CD14-positive monocyte (primary cell): ENCODE measurements at regions of chr19 and their contacts with region 1.

Region 1: GRCh38 chr19:46678110-46678732 is 17.2 kb upstream of the DACT3 start:
- DNase-seq: no peak
- H3K4me3 ChIP-seq: no peak overlapping the region
- H3K4me3 Mint-ChIP-seq: no peak overlapping the region
- H3K27ac ChIP-seq: no peak overlapping the region
- H3K27ac Mint-ChIP-seq: peak overlapping the region in 1 of 7 donors; percentile 54
- H3K4me1 ChIP-seq: no peaks in the 10 kb centered on the region
- H3K4me1 Mint-ChIP-seq: no peaks in the 10 kb centered on the region
- H3K27me3 ChIP-seq: no peaks in the 10 kb centered on the region
- H3K27me3 Mint-ChIP-seq: peaks cover 0 to 4% (median 3%) of the 10 kb centered on the region in 3 donors
- CTCF ChIP-seq: no peak

Region 2: DNA sequence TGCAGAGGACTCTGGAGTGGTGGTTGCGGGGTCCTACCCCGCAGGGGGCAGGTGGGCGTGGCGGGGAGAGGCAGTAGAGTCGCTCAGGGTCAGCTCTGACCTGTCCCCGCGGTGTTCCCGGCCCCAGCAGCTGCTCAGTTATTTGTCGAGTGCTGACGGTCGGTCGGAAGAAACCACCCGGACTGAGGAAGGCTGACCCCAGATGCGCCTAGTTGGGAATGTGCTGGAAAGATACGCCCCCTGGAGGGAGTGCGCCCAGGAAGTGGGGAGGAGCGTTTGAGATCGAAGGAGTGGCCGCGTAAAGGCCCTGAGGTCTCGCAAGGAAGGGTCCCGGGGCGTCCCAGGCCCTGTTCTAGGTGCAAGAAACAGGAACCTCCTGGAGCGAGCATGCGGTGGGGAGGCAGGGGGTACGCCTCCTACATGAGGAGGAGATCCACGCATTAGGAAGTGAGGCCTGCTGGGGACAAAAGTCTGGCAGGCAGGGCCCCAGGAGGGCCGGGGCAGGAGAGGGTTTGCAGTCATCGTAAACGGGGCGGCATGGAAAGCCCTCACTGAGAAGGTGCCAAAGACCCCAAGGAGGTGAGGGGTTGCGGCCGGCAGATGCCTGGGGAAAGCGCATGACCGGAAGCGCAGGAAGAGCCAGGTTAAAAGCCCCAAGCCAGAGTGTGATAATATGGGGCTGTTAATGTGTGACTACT is 274.0 kb before region 1 on chr19:
- intact Hi-C with region 1: loop called (anchors 10 kb)
- DNase-seq: peak in 2 of 3 donors; percentile 20 to 23
- H3K4me3 ChIP-seq: peak overlapping the region in 1 of 3 experiments; percentile 61
- H3K4me3 Mint-ChIP-seq: peak overlapping the region; percentile 56 to 91
- H3K27ac ChIP-seq: no peak overlapping the region
- H3K27ac Mint-ChIP-seq: peak overlapping the region in 3 of 7 donors; percentile 50 to 69 (median 68)
- H3K4me1 ChIP-seq: peaks cover 14 to 15% of the 10 kb centered on the region in 2 donors
- H3K4me1 Mint-ChIP-seq: peaks cover 19% of the 10 kb centered on the region
- H3K27me3 ChIP-seq: peaks cover 9 to 56% of the 10 kb centered on the region in 2 donors
- H3K27me3 Mint-ChIP-seq: peaks cover 69 to 83% (median 71%) of the 10 kb centered on the region in 3 donors
- CTCF ChIP-seq: peak; percentile 1

Region 3: DNA sequence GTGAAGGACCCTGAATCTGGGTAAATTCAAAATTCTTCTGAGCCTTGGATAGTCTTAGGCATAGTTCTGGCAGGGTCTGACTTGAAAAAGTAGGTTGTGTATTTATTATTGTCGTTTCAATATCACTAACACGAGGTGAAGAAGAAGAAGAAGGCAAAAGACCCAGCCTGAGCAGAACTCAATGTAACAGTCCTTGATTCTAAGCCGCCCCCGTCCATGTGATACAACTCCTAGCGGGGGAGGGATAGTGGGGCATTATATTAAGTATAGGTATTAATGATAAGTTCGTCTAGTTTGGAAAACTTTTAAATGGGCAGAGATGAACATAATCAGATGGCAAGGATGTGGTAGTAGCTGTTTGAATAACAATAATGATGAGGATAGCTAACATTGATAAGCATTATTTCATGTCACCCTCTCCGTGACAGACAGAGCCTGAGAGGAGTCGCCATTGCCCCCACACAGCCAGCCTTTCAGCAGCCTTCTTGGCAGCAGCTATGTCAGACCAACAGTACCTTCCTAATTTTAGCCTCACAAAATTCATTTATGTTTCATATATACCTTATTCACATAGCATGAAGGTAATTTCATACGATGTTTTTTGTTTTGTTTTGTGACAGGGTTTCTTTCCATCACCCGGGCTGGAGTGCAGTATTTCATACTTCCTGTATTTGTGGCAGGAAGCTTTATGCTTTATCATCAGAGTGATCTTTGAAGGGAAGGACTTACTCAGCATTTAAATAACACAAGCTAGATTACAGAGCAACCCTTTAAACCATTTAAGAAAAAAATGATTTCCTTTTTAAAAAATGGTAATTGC is 277.0 kb after region 1 on chr19:
- intact Hi-C with region 1: no loop called
- DNase-seq: peak; percentile 24 to 50 (median 45)
- H3K4me3 ChIP-seq: peak overlapping the region; percentile 56 to 96 (median 78)
- H3K4me3 Mint-ChIP-seq: peak overlapping the region; percentile 83 to 93
- H3K27ac ChIP-seq: peak overlapping the region; percentile 46 to 82
- H3K27ac Mint-ChIP-seq: peak overlapping the region; percentile 76 to 94 (median 87)
- H3K4me1 ChIP-seq: peaks cover 11 to 15% of the 10 kb centered on the region in 2 donors
- H3K4me1 Mint-ChIP-seq: peaks cover 24% of the 10 kb centered on the region
- H3K27me3 ChIP-seq: no peaks in the 10 kb centered on the region
- H3K27me3 Mint-ChIP-seq: no peaks in the 10 kb centered on the region
- CTCF ChIP-seq: no peak